ENCODE measurements at regions of chr12 and their contacts with region 1.

Region 1: GRCh38 chr12:5988659-5989116 is 43.6 kb upstream of the ANO2 start:
- DNase-seq: peak; percentile 83
- ATAC-seq: peak; percentile 93
- H3K4me3 Mint-ChIP-seq: no peak overlapping the region
- H3K27ac Mint-ChIP-seq: no peak overlapping the region
- H3K4me1 Mint-ChIP-seq: no peaks in the 10 kb centered on the region
- H3K27me3 Mint-ChIP-seq: no peaks in the 10 kb centered on the region
- CTCF ChIP-seq: peak; percentile 97

Region 2: DNA sequence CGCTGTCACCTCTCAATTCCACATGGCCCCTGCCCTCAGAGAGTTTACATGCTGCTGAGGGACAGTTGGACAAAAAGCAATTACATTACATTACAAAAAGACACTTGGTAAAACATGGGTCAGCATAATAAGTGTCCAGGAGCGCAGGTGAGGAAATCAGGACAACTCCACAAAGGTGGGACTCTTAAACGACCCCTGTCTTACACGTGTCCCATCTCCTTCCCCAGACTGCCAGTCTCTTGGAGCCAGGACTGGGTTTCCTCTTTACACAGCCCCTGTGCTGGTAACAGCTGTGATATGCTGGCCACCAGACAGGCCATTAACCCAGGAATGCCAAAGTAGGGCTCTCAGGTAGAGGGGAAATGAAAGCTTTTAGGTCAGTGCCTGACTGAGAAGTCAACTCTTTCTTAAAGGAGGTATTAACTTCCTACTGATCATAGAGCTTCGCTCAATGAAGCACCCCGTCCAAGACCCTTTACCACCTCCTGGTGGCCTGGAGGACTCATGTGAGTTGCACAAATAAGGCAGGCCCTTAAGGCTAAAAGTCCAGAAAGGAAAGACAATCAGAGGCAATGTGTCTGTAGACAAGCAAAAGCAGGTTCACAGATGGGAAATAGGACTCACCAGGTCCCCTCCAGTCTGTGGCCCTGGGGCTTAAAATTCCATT is 99.2 kb before region 1 on chr12:
- CTCF ChIA-PET with region 1: no interaction called
- POLR2A ChIA-PET with region 1: no interaction called
- intact Hi-C with region 1: no loop called
- DNase-seq: peak; percentile 59
- ATAC-seq: no peak
- H3K4me3 Mint-ChIP-seq: no peak overlapping the region
- H3K27ac Mint-ChIP-seq: no peak overlapping the region
- H3K4me1 Mint-ChIP-seq: peaks cover 5% of the 10 kb centered on the region
- H3K27me3 Mint-ChIP-seq: peaks cover 39% of the 10 kb centered on the region
- CTCF ChIP-seq: no peak

Region 3: GRCh38 chr12:5965950-5966383 is 22.7 kb before region 1 on chr12:
- CTCF ChIA-PET with region 1: interaction called, 12 read pairs
- POLR2A ChIA-PET with region 1: interaction called, 3 read pairs
- intact Hi-C with region 1: no loop called
- DNase-seq: peak; percentile 64
- ATAC-seq: peak; percentile 93
- H3K4me3 Mint-ChIP-seq: no peak overlapping the region
- H3K27ac Mint-ChIP-seq: no peak overlapping the region
- H3K4me1 Mint-ChIP-seq: no peaks in the 10 kb centered on the region
- H3K27me3 Mint-ChIP-seq: peaks cover 2% of the 10 kb centered on the region
- CTCF ChIP-seq: peak; percentile 65

Region 4: GRCh38 chr12:5973461-5974130 is 15.1 kb before region 1 on chr12:
- CTCF ChIA-PET with region 1: interaction called, 33 read pairs
- POLR2A ChIA-PET with region 1: no interaction called
- intact Hi-C with region 1: no loop called
- DNase-seq: no peak
- ATAC-seq: no peak
- H3K4me3 Mint-ChIP-seq: no peak overlapping the region
- H3K27ac Mint-ChIP-seq: no peak overlapping the region
- H3K4me1 Mint-ChIP-seq: no peaks in the 10 kb centered on the region
- H3K27me3 Mint-ChIP-seq: no peaks in the 10 kb centered on the region
- CTCF ChIP-seq: no peak

Region 5: DNA sequence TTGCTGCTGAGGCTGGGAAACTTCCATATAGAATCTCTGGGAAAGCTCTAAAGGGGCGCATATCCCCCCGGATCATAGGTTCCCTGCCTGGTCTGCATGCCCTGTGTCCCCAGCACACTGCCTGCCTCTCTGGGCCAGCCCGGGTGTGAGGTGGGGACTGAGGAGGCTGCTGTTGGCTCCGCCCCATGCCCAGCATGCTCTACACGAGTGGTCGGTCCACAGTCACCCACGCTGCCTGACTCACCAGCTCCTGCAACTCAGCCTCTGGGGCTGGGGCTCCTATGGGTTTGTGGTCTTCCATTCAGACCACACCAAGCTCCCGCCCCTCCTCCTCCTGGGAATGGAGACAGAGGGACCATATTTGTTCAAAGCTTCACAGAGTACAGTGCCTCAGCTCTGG is 44.9 kb after region 1 on chr12:
- CTCF ChIA-PET with region 1: interaction called, 274 read pairs
- POLR2A ChIA-PET with region 1: no interaction called
- intact Hi-C with region 1: loop called (anchors 2 kb)
- DNase-seq: peak; percentile 13
- ATAC-seq: no peak
- H3K4me3 Mint-ChIP-seq: no peak overlapping the region
- H3K27ac Mint-ChIP-seq: no peak overlapping the region
- H3K4me1 Mint-ChIP-seq: no peaks in the 10 kb centered on the region
- H3K27me3 Mint-ChIP-seq: no peaks in the 10 kb centered on the region
- CTCF ChIP-seq: no peak

Region 6: DNA sequence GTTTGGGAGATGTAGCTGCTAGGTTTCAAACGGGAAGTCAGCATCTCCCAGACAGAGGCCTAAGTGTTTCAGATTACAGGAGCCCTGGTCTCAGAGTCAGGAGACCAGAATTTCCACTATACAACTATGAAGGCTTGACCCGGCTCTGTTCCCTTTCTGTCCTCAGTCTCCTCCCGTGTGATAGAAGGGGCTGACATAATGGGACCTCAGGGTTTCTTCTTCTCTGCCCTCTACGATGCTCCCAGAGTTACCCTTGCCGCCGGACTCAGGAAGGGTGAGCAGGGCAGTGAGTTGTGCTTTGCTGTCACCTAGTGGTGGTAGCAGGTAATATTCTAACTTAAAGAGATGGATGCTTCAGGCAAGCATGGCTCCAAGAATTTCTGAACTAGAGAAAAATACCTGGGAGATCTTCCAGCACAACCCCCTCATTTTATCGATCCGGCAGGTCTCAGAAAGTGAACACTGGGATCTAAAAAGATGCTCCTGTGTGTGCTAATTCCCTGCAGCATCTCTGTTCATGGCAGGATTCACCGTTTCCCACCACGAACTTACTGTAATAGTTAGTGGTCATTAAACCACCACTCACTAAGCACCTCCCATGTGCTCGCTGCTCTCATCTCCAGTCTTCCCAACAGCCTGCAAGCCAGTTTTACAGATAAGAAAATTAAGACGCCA is 51.3 kb after region 1 on chr12:
- CTCF ChIA-PET with region 1: interaction called, 274 read pairs
- POLR2A ChIA-PET with region 1: no interaction called
- intact Hi-C with region 1: loop called (anchors 2 kb)
- DNase-seq: peak; percentile 68
- ATAC-seq: peak; percentile 83
- H3K4me3 Mint-ChIP-seq: no peak overlapping the region
- H3K27ac Mint-ChIP-seq: no peak overlapping the region
- H3K4me1 Mint-ChIP-seq: peaks cover 2% of the 10 kb centered on the region
- H3K27me3 Mint-ChIP-seq: no peaks in the 10 kb centered on the region
- CTCF ChIP-seq: peak; percentile 82

Region 7: DNA sequence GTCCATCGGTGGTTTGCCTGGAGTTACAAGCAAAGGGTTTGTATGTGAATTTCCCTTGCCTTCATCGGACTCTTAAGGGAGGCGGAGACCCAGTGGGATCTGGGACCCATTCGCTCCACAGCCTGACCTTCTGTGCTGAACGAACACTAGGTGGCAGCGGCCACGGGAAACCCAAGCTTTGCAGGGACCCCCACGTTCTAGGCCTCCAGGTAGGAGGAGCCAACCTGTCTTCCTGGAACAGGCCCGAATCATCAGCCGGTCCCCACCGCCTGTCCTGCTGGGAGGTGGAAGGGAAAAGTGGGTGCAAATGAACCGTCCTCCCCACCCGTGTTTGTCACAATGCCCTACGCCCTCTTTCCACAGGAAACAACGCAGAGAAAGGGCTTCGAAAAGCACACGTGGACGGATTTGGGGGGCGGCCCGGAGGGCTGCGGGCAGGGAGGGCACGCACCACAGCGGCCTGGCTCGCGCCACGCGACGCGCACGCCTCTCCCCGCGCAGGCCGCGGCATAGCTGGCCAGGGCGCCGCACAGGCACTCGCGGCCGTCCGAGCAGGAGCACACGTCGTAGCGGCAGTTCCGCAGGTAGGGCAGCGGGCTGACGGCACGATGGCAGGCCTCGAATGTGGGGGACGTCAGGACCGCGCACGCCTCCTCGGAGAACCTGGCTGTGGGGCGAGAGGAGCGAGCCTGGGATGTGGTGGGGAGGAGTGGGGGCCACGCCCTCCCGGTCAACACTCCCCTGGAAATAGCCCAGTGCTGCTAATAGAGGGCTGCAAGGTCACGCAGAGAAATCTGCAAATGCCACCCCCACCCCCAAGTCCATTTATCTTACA is 67.9 kb after region 1 on chr12:
- CTCF ChIA-PET with region 1: interaction called, 27 read pairs
- POLR2A ChIA-PET with region 1: no interaction called
- intact Hi-C with region 1: no loop called
- DNase-seq: peak; percentile 63
- ATAC-seq: peak; percentile 84
- H3K4me3 Mint-ChIP-seq: peak overlapping the region; percentile 58
- H3K27ac Mint-ChIP-seq: peak overlapping the region; percentile 60
- H3K4me1 Mint-ChIP-seq: peaks cover 5% of the 10 kb centered on the region
- H3K27me3 Mint-ChIP-seq: no peaks in the 10 kb centered on the region
- CTCF ChIP-seq: peak; percentile 20

Region 8: GRCh38 chr12:6285063-6285477 is 296.4 kb after region 1 on chr12:
- CTCF ChIA-PET with region 1: interaction called, 18 read pairs
- POLR2A ChIA-PET with region 1: no interaction called
- intact Hi-C with region 1: loop called (anchors 10 kb)
- DNase-seq: peak; percentile 63
- ATAC-seq: peak; percentile 90
- H3K4me3 Mint-ChIP-seq: no peak overlapping the region
- H3K27ac Mint-ChIP-seq: no peak overlapping the region
- H3K4me1 Mint-ChIP-seq: no peaks in the 10 kb centered on the region
- H3K27me3 Mint-ChIP-seq: peaks cover 9% of the 10 kb centered on the region
- CTCF ChIP-seq: peak; percentile 98